Heart right ventricle (tissue), 16 donors: ENCODE measurements at regions of chr4 and their contacts with region 1.

Region 1: GRCh38 chr4:127400731-127401346 is 231.9 kb upstream of the INTU start:
- DNase-seq: peak; percentile 25 to 47
- ATAC-seq: peak in 2 of 8 donors; percentile 41 to 53
- H3K4me3 ChIP-seq: no peak overlapping the region
- H3K27ac ChIP-seq: no peak overlapping the region
- H3K4me1 ChIP-seq: no peaks in the 10 kb centered on the region
- H3K27me3 ChIP-seq: no peaks in the 10 kb centered on the region
- CTCF ChIP-seq: peak; percentile 38 to 78 (median 68)

Region 2: GRCh38 chr4:126427781-126428585 is 972.9 kb before region 1 on chr4:
- intact Hi-C with region 1: loop called in 1 of 10 experiments (anchors 5 kb)
- DNase-seq: no peak
- ATAC-seq: no peak
- H3K4me3 ChIP-seq: no peak overlapping the region
- H3K27ac ChIP-seq: no peak overlapping the region
- H3K4me1 ChIP-seq: no peaks in the 10 kb centered on the region
- H3K27me3 ChIP-seq: no peaks in the 10 kb centered on the region
- CTCF ChIP-seq: no peak